Activated CD4-positive, alpha-beta memory T cell treated with anti-CD3 and anti-CD28 coated beads, Interleukin-2, amount 10 ng/mL, durations not matched to agents 7 days and 5 days (primary cell): ENCODE measurements at regions of chr1 and their contacts with region 1.

Region 1: DNA sequence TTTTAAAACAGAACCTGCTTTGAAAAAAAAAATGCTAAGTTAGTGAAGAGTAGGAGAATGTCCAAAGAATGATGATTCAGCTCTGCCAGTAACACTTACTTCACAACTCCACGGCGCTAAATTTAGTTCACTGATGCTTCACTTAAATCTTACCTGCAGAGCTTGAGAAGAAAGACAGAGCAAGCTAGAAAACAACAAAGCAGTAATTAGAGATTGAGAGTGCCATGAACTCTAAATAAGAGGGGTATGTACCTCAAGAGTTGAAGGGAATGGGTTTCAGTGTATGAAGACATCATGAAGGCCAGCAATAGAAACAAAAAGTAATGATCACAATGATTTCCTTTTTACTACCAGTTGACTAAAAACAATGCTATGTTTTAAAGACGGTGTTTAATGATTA is 32.8 kb downstream of the EPRS1 start:
- DNase-seq: no peak
- H3K4me3 Mint-ChIP-seq: no peak overlapping the region
- H3K27ac Mint-ChIP-seq: peak overlapping the region; percentile 72
- H3K4me1 Mint-ChIP-seq: peaks cover 29% of the 10 kb centered on the region
- H3K27me3 Mint-ChIP-seq: no peaks in the 10 kb centered on the region

Region 2: DNA sequence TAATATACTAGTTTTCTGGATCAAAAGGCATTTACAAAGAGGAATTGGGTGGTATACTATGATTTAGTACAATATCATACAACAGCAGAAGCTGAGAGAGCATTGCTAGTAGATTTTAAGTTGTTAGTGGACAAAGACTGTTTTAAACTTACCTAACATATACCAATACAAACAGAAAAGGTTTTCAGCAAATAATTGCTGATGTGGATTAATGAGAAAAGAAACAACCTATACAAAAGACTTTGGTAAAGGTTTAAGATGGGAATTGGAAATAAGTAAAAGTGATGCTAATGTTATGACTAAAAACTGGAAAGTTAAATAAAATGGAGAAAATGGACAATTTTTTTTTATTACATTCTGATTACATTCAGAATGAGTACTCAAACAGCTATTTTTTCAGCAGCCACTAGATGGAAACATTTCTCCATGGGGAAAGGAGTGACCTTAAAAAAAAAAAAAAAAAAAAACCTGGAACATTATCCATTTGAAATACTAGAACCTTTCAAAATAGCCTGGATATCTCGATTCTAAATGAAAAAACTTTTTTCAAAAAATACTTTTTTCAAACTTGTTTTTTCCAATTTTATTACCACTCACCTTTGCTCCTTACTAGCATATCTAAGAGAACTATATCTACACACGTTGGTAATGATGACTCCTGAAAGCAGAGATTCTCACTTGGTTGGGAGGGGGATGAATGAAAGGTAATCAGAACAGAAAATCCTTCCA is 22.6 kb before region 1 on chr1:
- CTCF ChIA-PET with region 1: interaction called, 16 read pairs
- POLR2A ChIA-PET with region 1: no interaction called
- DNase-seq: no peak
- H3K4me3 Mint-ChIP-seq: no peak overlapping the region
- H3K27ac Mint-ChIP-seq: no peak overlapping the region
- H3K4me1 Mint-ChIP-seq: no peaks in the 10 kb centered on the region
- H3K27me3 Mint-ChIP-seq: no peaks in the 10 kb centered on the region

Region 3: GRCh38 chr1:220151454-220151853 is 138.0 kb after region 1 on chr1:
- CTCF ChIA-PET with region 1: no interaction called
- POLR2A ChIA-PET with region 1: no interaction called
- DNase-seq: no peak
- H3K4me3 Mint-ChIP-seq: no peak overlapping the region
- H3K27ac Mint-ChIP-seq: no peak overlapping the region
- H3K4me1 Mint-ChIP-seq: peaks cover 3% of the 10 kb centered on the region
- H3K27me3 Mint-ChIP-seq: no peaks in the 10 kb centered on the region